Activated CD4-positive, alpha-beta T cell treated with anti-CD3 and anti-CD28 coated beads for 36 hours (primary cell): ENCODE measurements at regions of chr14 and their contacts with region 1.

Region 1: DNA sequence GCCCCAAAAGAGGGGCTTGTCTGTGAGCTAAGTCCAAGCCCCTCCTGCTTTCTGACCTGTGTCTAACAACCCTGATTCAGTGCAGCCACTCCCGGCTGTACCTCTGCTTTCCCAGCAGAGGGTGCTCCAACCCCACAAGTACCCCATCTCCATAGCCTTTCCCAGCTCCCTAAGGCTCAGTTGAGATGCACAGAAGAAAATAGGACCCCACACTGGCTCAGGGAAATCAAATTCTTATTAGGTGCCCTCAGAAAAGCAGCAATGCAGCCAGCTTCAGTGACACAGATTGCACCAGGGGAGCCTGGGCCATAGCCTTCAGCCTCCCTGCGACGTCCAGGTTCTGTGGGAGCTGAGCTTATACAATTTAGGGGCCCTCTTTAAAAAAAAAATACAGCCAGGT is 49.9 kb downstream of the LRRC74A start:
- DNase-seq: peak; percentile 69
- ATAC-seq: peak; percentile 89
- H3K4me3 Mint-ChIP-seq: no peak overlapping the region
- H3K27ac Mint-ChIP-seq: no peak overlapping the region
- H3K4me1 Mint-ChIP-seq: no peaks in the 10 kb centered on the region
- H3K27me3 Mint-ChIP-seq: no peaks in the 10 kb centered on the region

Region 2: GRCh38 chr14:76891391-76891790 is 15.3 kb after region 1 on chr14:
- CTCF ChIA-PET with region 1: interaction called, 29 read pairs
- POLR2A ChIA-PET with region 1: no interaction called
- intact Hi-C with region 1: no loop called
- DNase-seq: no peak
- ATAC-seq: no peak
- H3K4me3 Mint-ChIP-seq: no peak overlapping the region
- H3K27ac Mint-ChIP-seq: no peak overlapping the region
- H3K4me1 Mint-ChIP-seq: no peaks in the 10 kb centered on the region
- H3K27me3 Mint-ChIP-seq: no peaks in the 10 kb centered on the region

Region 3: DNA sequence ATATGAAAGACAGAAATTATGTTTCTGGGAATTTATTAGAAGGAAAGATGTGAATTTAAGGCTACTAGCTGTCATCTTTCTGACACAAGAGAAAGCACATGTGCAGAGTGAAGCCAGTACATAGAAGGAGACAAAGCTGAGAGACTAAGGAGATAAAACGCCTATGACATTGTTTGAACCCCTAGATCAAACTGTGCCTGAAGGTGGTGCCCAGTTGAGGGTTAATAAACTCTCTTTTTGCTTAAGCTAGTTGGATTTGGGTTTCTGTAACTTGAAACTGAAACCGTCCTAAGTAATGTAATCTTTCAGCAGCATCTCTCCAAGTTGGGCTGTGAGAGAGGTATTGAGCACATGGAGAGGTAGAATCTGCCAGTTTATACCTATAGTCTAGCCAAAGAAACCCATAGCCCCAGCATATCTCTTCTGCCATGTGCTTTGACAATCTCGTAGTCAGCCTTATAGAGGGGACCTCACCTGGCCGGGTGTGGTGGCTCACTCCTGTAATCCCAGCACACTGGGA is 34.4 kb after region 1 on chr14:
- CTCF ChIA-PET with region 1: interaction called, 19 read pairs
- POLR2A ChIA-PET with region 1: no interaction called
- intact Hi-C with region 1: loop called (anchors 1 to 5 kb)
- DNase-seq: no peak
- ATAC-seq: no peak
- H3K4me3 Mint-ChIP-seq: no peak overlapping the region
- H3K27ac Mint-ChIP-seq: no peak overlapping the region
- H3K4me1 Mint-ChIP-seq: peaks cover 26% of the 10 kb centered on the region
- H3K27me3 Mint-ChIP-seq: no peaks in the 10 kb centered on the region

Region 4: DNA sequence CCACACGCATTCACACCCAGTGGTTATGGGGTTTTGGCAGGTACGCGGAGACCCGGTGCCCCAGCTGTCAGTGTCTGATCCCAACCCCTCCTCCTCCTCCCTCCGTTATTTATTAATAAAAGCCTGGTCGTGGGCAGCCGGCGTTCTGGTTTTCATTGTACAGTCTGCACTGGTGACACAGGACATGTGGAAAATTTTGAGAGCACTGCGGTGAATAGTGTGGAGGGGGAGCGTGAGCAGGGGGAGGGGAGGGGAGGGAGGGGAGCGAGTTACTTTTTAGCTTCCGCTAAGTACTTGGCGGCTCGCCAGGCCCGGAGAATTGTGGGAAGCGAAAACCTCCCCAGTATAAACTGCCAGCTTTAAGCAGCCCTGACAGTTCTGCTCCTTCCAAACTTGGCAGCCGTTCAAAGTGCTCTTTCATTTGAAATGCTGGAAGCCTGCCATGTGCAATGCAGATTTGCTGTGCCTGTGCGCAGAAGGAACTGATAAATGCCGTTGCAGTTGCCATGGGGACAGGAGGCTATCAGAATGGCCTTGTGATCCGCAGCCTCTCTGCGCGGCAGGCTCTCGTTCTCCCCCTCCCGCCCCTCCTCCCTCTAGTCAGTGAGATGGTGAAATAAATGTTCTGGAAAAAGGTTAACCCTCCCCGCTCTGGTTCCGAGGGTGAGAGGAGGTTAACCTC is 164.1 kb after region 1 on chr14:
- CTCF ChIA-PET with region 1: interaction called, 27 read pairs
- POLR2A ChIA-PET with region 1: no interaction called
- intact Hi-C with region 1: no loop called
- DNase-seq: peak; percentile 98
- ATAC-seq: peak; percentile 66
- H3K4me3 Mint-ChIP-seq: peak overlapping the region; percentile 63
- H3K27ac Mint-ChIP-seq: peak overlapping the region; percentile 93
- H3K4me1 Mint-ChIP-seq: peaks cover 89% of the 10 kb centered on the region
- H3K27me3 Mint-ChIP-seq: no peaks in the 10 kb centered on the region

Region 5: DNA sequence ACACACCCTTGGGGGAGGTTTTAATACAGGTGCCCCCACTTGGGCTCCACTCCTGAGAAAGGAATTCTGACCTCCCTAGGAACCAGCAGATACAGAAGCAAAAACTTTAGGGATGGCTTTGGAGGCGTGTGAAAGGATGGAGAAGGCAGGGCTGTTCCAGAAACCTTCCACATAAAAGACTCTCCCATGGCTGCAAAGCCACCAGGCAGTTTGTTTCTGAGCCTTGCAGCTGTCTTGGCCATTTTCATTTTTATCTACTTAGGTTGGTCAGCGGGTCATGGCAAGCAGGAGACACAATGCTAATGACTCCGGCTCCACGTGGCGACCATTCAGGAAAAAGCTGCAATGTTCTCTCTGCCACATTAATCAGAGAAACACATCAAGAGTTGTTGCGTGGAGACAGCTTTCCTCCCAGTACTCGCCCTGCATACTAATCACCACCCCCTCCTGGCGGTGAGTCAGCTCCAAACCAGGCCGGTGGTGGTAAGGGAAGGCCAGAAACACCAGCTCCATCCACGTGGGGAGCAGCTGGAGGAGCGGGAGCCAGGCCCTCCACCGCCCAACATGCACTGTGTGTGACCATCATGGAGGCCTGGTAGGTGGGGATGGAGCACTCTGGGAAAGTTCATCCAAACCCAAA is 183.3 kb after region 1 on chr14:
- CTCF ChIA-PET with region 1: interaction called, 59 read pairs
- POLR2A ChIA-PET with region 1: no interaction called
- intact Hi-C with region 1: no loop called
- DNase-seq: peak; percentile 55
- ATAC-seq: peak; percentile 69
- H3K4me3 Mint-ChIP-seq: no peak overlapping the region
- H3K27ac Mint-ChIP-seq: no peak overlapping the region
- H3K4me1 Mint-ChIP-seq: peaks cover 5% of the 10 kb centered on the region
- H3K27me3 Mint-ChIP-seq: no peaks in the 10 kb centered on the region

Region 6: GRCh38 chr14:77314043-77314442 is 438.0 kb after region 1 on chr14:
- CTCF ChIA-PET with region 1: interaction called, 6 read pairs
- POLR2A ChIA-PET with region 1: no interaction called
- intact Hi-C with region 1: loop called in 1 of 2 experiments (anchors 2 kb)
- DNase-seq: no peak
- ATAC-seq: no peak
- H3K4me3 Mint-ChIP-seq: no peak overlapping the region
- H3K27ac Mint-ChIP-seq: no peak overlapping the region
- H3K4me1 Mint-ChIP-seq: no peaks in the 10 kb centered on the region
- H3K27me3 Mint-ChIP-seq: no peaks in the 10 kb centered on the region